Gastrocnemius medialis (tissue), 4 donors: ENCODE measurements at regions of chr11 and their contacts with region 1.

Region 1: GRCh38 chr11:130002846-130003716 is 446 bp upstream of the PRDM10 start:
- DNase-seq: peak; percentile 96 to 97
- ATAC-seq: peak; percentile 84 to 89
- H3K4me3 ChIP-seq: peak overlapping the region; percentile 64 to 81 (median 68)
- H3K27ac ChIP-seq: peak overlapping the region; percentile 95 to 99 (median 97)
- H3K4me1 ChIP-seq: peaks cover 21 to 22% of the 10 kb centered on the region in 2 donors
- H3K27me3 ChIP-seq: no peaks in the 10 kb centered on the region
- CTCF ChIP-seq: peak in 2 of 5 experiments; percentile 10 to 38
- POLR2A ChIP-seq: peak; percentile 93 to 94

Region 2: GRCh38 chr11:129895126-129896041 is 107.7 kb before region 1 on chr11 and contains the start of gene NFRKB:
- in situ Hi-C with region 1: no loop called
- intact Hi-C with region 1: loop called (anchors 2 kb)
- DNase-seq: peak; percentile 59 to 73
- ATAC-seq: peak; percentile 91 to 93
- H3K4me3 ChIP-seq: peak within 1 kb of the TSS; percentile 76 to 100 (median 96)
- H3K27ac ChIP-seq: peak within 1 kb of the TSS; percentile 85 to 96 (median 92)
- H3K4me1 ChIP-seq: peaks cover 13 to 18% of the 10 kb centered on the region in 2 donors
- H3K27me3 ChIP-seq: no peaks in the 10 kb centered on the region
- CTCF ChIP-seq: no peak
- POLR2A ChIP-seq: peak; percentile 53 to 57
- total RNA-seq, gene NFRKB: 22.5 to 34.3 (median 23.4) TPM

Region 3: GRCh38 chr11:129930296-129930695 is 72.8 kb before region 1 on chr11:
- in situ Hi-C with region 1: no loop called
- intact Hi-C with region 1: no loop called
- DNase-seq: no peak
- ATAC-seq: no peak
- H3K4me3 ChIP-seq: no peak overlapping the region
- H3K27ac ChIP-seq: no peak overlapping the region
- H3K4me1 ChIP-seq: no peaks in the 10 kb centered on the region
- H3K27me3 ChIP-seq: no peaks in the 10 kb centered on the region
- CTCF ChIP-seq: no peak
- POLR2A ChIP-seq: no peak

Region 4: DNA sequence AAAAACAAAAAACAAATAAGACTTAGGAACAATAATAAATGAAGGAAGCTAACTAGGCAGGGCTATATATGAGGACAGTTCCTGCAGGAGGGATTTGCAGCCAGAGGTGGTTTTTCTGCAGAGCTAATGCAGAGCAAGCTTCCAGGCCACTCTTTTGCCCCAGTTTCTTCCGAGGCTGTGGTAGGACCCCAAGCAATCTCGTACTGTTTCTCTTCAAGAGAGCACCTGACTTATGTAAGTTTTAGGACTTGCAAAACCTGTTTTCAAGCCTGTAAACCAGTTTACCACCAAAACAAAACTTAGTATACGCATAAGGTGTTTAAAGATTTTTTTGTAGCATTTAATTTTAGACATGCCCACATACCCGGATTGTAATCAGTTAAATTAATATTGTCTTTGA is 58.9 kb after region 1 on chr11:
- in situ Hi-C with region 1: loop called in 1 of 4 experiments (anchors 5 kb)
- intact Hi-C with region 1: no loop called
- DNase-seq: no peak
- ATAC-seq: no peak
- H3K4me3 ChIP-seq: no peak overlapping the region
- H3K27ac ChIP-seq: no peak overlapping the region
- H3K4me1 ChIP-seq: no peaks in the 10 kb centered on the region
- H3K27me3 ChIP-seq: no peaks in the 10 kb centered on the region
- CTCF ChIP-seq: no peak
- POLR2A ChIP-seq: no peak

Region 5: DNA sequence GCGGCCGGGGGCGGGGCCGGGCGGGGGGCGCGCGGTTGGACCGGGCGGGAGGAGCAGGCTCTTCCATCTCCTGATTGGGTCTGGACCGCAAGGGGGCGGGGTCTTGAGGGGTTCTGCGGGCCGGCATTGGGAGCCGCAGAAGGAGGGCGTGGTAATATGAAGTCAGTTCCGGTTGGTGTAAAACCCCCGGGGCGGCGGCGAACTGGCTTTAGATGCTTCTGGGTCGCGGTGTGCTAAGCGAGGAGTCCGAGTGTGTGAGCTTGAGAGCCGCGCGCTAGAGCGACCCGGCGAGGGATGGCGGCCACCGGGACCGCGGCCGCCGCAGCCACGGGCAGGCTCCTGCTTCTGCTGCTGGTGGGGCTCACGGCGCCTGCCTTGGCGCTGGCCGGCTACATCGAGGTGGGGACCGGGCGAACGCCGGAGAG is 66.6 kb after region 1 on chr11 and contains the start of gene APLP2:
- in situ Hi-C with region 1: loop called in 3 of 4 experiments (anchors 5 to 10 kb)
- intact Hi-C with region 1: loop called (anchors 1 kb)
- DNase-seq: peak; percentile 99
- ATAC-seq: peak; percentile 88 to 91
- H3K4me3 ChIP-seq: peak within 1 kb of the TSS; percentile 82 to 90 (median 86)
- H3K27ac ChIP-seq: peak within 1 kb of the TSS; percentile 88 to 94 (median 90)
- H3K4me1 ChIP-seq: peaks cover 14 to 24% of the 10 kb centered on the region in 2 donors
- H3K27me3 ChIP-seq: no peaks in the 10 kb centered on the region
- CTCF ChIP-seq: no peak
- POLR2A ChIP-seq: peak; percentile 85 to 92
- total RNA-seq, gene APLP2: 80.4 to 110 (median 82.1) TPM

Region 6: DNA sequence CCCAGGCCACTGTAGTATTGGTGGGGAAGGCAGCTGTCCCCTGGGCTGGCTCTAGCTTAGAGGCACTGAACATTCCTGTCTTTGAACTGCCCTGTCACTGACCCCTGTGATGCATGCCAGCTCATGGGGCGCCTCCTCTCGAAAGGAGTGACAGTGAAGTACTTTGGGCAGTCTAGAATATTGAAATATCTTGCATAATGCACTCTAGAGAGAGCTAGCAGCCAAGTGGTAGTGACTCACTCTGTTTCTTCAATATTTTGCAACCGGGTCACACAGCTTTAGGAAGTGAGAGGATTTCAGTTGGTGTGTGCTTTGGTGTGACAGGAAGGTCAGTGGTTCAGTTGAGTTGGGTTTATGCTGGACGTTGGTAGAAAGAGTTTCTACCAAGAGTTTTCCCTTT is 121.0 kb after region 1 on chr11:
- in situ Hi-C with region 1: loop called in 1 of 4 experiments (anchors 10 kb)
- intact Hi-C with region 1: loop called (anchors 2 kb)
- DNase-seq: peak; percentile 52 to 88
- ATAC-seq: peak; percentile 99 to 100
- H3K4me3 ChIP-seq: no peak overlapping the region
- H3K27ac ChIP-seq: peak overlapping the region; percentile 60 to 66 (median 62)
- H3K4me1 ChIP-seq: peaks cover 15 to 30% of the 10 kb centered on the region in 2 donors
- H3K27me3 ChIP-seq: no peaks in the 10 kb centered on the region
- CTCF ChIP-seq: no peak
- POLR2A ChIP-seq: no peak

Region 7: GRCh38 chr11:130314750-130315285 is 311.7 kb after region 1 on chr11 and contains the start of gene ZBTB44:
- in situ Hi-C with region 1: no loop called
- intact Hi-C with region 1: loop called (anchors 2 kb)
- DNase-seq: peak; percentile 88 to 91
- ATAC-seq: peak; percentile 83 to 86
- H3K4me3 ChIP-seq: peak within 1 kb of the TSS; percentile 79 to 90 (median 86)
- H3K27ac ChIP-seq: peak within 1 kb of the TSS; percentile 93 to 99 (median 95)
- H3K4me1 ChIP-seq: peaks cover 28 to 42% of the 10 kb centered on the region in 2 donors
- H3K27me3 ChIP-seq: no peaks in the 10 kb centered on the region
- CTCF ChIP-seq: no peak
- POLR2A ChIP-seq: no peak
- total RNA-seq, gene ZBTB44: 57.4 to 108 (median 68.8) TPM

Region 8: DNA sequence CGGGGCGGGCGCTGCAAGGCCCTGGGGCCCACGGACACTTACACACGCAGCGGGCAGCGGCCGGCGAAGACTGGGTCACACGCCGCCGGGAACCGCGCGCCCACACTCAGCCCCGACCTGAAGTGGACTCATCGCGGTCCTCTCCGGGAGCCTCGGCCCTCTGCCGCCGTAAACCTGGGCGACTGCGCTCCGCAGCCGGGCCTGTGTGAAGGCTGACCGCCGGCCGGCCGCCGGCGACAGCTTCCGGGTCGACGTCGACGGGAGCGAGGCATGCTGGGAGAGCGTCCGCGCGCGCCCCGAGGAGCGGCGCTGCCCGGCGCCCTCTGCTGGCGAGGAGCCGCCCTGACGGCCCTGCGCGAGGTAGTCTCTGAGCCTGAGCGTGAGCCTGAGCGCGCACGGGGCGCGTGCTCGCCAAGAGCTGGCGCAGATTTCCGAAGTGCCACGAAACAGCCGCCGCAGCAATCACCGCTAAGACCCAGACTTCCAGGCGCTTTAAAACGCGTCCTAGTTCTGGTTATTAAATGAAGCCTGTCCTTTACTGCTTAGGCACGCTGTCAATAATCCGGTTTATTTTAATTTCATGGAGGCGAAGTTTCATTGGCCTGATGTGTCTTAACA is 913.3 kb after region 1 on chr11 and contains the start of gene SNX19:
- in situ Hi-C with region 1: no loop called
- intact Hi-C with region 1: loop called (anchors 10 kb)
- DNase-seq: peak; percentile 83 to 88
- ATAC-seq: peak; percentile 94 to 97
- H3K4me3 ChIP-seq: peak within 1 kb of the TSS; percentile 79 to 99 (median 94)
- H3K27ac ChIP-seq: peak within 1 kb of the TSS; percentile 86 to 97 (median 92)
- H3K4me1 ChIP-seq: peaks cover 38 to 42% of the 10 kb centered on the region in 2 donors
- H3K27me3 ChIP-seq: no peaks in the 10 kb centered on the region
- CTCF ChIP-seq: peak; percentile 87 to 98 (median 96)
- POLR2A ChIP-seq: peak; percentile 92 to 97
- total RNA-seq, gene SNX19: 37.9 to 88.2 (median 72.0) TPM